ENCODE measurements at regions of chr1 and their contacts with region 1.

Region 1: DNA sequence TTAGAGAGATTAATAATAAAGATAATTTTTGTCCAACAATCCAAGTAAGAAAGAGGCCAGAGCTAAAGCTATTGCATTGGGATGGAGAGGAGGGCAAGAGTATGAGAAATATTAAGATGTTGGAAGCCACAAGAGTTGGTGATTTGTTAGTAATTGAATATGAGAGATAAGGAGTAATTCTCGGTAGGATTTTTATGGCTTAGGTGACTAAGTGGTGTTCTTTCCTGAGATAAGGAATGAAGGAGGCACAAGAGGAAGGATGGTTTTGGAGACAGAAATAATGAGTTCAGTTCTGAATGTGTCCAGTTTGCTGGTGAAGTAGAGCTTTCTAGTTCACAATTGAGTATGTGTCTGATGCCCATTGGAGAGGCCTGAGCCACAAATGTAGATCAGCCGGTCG is 9.4 kb downstream of the TRMT13 start:
- DNase-seq: no peak
- ATAC-seq: no peak

Region 2: GRCh38 chr1:98794196-98794886 is 1348.0 kb before region 1 on chr1:
- intact Hi-C with region 1: no loop called
- DNase-seq: no peak
- ATAC-seq: no peak

Region 3: DNA sequence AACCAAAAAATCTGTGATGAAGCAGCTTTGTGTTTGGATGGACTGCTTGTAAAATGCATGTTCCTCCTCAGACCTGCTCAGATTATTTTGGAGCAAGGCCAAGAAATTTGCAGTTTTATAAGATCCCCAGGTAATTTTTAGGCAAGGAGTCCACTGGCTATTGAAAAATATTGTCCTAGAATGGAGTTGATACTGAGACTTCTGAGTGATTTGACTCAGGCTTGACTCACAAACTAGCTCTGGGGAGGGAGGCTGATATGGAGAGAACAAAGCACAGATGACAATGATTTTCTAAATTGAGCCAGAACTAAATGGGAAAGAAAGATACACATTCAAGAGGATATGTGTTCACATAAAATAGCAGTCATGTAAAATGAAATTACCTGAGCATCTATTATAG is 255.5 kb before region 1 on chr1:
- intact Hi-C with region 1: loop called (anchors 5 kb)
- DNase-seq: no peak
- ATAC-seq: no peak

Region 4: DNA sequence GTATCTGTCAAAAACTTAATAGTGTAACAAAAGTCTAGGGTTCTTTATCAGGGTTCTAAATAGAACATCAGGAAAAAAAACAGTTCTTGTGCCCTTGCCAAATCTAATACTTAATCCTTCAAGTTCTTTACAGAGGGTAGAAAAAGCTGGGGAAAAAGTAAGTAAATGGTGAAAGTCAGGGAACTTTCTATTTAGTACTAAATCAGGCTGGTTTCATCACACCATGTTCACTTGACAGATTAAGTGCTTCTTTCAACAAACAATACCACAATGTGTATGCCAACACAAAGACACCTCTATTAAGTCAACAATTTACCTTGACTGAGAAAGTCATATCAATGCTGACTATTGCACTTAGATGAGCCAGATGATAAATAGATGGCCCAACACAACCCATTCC is 97.6 kb after region 1 on chr1:
- intact Hi-C with region 1: no loop called
- DNase-seq: no peak
- ATAC-seq: no peak